Activated T-helper 1 cell treated with anti-CD3 and anti-CD28 coated beads, Interleukin-12 subunit alpha, Interleukin-12 subunit beta, Interleukin-2, Interleukin-4 antibody, amounts not matched to agents 30 ng/mL and 10 ng/mL and 1 ng/mL, durations not matched to agents 14 hours and 24 hours and 36 hours (primary cell): ENCODE measurements at regions of chr11 and their contacts with region 1.

Region 1: DNA sequence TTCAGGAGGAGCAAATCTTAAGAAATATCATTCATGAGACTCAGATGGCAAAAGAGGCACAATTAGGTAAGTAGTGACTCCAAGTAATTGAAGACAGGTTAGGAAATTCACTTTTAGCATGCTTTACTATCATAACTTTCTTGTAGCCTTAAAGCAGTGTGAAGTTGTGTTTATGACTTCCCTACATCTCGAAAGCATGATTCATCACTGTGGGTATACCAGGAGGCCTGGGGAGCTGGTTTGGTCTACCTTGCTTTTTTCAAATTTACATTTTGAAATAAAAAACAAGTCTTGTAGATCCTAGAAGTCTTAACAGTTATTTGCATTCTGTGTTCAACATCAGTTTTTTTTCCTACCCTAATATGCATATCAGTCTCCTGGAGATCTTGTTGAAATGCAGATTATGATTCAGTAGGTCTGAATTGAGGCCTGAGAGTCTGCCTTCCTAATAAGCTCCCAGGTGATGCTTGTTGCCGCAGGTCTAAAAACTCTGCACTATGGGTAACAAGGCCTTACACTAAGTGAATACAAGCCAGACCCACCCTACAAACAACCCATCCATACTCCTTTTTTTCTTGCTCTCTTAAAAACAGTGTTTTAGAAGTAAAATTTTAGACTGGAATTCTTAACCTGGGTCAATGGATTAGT is 41.4 kb downstream of the TTC17 start:
- DNase-seq: no peak
- H3K4me3 Mint-ChIP-seq: no peak overlapping the region
- H3K27ac Mint-ChIP-seq: peak overlapping the region; percentile 31
- H3K4me1 Mint-ChIP-seq: peaks cover 54% of the 10 kb centered on the region
- H3K27me3 Mint-ChIP-seq: no peaks in the 10 kb centered on the region

Region 2: GRCh38 chr11:43447151-43447550 is 47.0 kb after region 1 on chr11:
- intact Hi-C with region 1: loop called (anchors 5 kb)
- DNase-seq: no peak
- H3K4me3 Mint-ChIP-seq: no peak overlapping the region
- H3K27ac Mint-ChIP-seq: peak overlapping the region; percentile 61
- H3K4me1 Mint-ChIP-seq: peaks cover 18% of the 10 kb centered on the region
- H3K27me3 Mint-ChIP-seq: peaks cover 2% of the 10 kb centered on the region